BJ (cell line): ENCODE measurements at regions of chr3 and their contacts with region 1.

Region 1: DNA sequence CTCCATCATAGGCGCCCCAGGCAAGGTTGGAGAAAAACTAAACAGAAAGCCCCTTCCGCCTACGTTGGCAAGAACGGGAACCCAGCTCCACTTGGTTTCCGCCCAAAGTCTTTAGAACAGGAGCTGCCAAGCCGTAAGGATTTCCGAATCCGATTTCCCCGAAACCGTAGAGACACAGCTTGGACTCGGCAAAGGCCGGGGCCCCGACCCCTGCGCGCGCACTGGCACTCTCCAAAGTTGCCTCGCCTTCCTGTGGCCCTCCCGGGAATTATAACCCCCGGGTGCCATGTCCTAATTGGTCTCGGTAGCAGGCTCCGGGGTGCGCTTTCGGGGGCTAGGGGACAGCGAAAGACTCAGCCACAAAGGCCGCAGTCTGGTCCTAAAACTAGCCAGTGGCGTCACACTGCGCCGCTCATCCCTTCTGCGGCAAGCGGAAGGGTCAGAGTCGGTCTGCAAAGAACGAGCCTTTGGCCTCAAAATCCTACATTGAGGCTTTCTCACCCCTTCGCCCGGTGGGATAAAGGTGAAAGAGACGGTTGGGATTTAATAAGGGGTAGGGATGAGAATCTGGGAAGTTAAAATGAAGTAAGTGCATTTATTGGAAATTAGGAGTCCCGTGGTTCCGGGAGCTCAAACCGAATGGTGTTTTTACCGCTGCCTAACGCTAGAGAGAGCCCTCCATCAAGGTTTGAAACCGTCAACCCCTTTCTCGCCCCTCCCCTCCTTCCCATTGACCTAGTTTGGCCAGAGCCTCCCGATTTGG is 6.8 kb downstream of the BCL6 start:
- DNase-seq: no peak
- H3K4me3 ChIP-seq: peak overlapping the region; percentile 45
- H3K27me3 ChIP-seq: no peaks in the 10 kb centered on the region
- CTCF ChIP-seq: peak; percentile 77

Region 2: GRCh38 chr3:187533797-187534196 is 204.7 kb before region 1 on chr3:
- CTCF ChIA-PET with region 1: no interaction called
- POLR2A ChIA-PET with region 1: no interaction called
- DNase-seq: no peak
- H3K4me3 ChIP-seq: no peak overlapping the region
- H3K27me3 ChIP-seq: no peaks in the 10 kb centered on the region
- CTCF ChIP-seq: no peak

Region 3: DNA sequence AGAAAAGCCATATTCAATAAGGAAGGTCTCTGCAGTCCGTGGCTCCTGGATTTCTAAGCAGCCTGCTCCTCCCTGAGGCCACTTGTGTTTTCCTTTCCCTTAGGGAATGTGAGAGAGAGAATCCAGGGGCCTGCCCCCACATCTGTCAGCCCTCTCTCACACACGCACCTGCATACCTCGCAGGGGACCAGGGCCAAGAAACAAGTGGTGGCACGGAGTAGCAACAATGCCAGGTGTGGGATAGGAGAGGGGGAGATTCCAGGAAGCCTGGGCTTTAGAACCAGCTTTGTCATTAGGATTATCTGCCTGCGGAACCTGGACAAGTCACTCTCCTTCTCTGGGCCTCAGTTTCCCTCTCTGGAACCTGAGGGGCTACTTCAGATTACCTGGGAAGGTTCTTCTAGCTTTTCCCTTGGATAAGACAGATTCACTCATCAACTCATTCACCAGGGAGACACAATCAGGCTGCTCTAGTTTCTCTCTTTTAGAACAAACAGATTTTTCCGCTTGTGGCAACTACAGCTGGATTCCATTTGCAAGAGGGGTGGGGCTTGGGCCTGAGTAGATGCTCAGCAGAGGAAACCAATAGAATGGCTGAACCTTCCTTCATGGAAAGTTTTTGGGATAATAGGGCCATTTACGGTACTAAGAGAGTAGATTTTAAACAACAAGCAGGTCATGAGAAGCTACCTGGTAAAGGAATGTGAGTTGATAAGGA is 12.7 kb before region 1 on chr3:
- CTCF ChIA-PET with region 1: interaction called, 21 read pairs
- POLR2A ChIA-PET with region 1: no interaction called
- DNase-seq: no peak
- H3K4me3 ChIP-seq: no peak overlapping the region
- H3K27me3 ChIP-seq: no peaks in the 10 kb centered on the region
- CTCF ChIP-seq: no peak

Region 4: DNA sequence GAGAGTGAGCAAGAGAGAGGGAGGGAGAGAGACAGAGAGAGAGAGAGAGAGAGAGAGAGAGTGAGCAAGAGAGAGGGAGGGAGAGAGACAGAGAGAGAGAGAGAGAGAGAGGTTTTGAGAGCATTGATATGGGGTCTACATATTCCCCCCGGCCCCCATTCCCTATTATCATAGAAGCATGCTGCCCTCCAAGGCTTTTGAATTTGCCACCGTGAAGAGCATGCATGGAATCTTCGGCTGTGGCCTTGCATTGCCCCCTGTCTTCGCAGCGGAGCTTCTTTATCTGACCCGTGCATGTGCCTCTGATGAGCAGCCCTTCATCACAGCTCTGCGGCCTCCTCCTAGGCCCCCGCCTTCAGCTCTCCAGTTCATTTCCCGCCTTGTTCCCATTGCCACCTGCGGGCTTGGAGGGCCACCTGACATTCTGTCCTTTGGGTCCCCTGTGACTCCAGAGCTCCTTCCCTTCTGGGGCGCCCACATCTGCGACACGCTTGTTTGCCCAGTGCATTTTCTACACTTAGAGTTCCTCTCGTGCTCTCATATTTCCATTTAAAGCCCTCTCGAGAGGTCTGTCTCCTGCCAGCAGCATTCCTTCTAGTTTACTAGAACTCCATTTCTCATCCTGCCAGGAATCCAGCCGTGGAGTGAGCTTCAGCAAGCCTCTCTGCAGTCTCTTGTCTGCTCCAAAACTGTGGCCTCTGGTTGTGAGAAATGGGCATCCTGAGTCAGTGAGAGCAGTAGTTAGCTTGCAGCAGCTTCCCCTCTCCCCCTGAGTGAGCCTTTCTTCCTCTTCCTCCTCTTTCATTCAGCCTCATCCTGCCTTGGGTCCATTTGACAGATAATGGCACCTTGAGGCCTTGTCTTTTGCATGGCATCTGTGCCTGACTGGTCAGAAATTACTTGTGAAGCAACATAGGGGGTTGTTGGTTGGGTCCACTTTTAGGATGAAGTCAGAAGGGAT is 440.8 kb after region 1 on chr3:
- CTCF ChIA-PET with region 1: interaction called, 3 read pairs
- POLR2A ChIA-PET with region 1: interaction called, 12 read pairs
- DNase-seq: no peak
- H3K4me3 ChIP-seq: no peak overlapping the region
- H3K27me3 ChIP-seq: no peaks in the 10 kb centered on the region
- CTCF ChIP-seq: 0 out of 2 replicates have a peak, but pooled peaks have one; percentile 13

Region 5: GRCh38 chr3:188421836-188422540 is 683.5 kb after region 1 on chr3:
- CTCF ChIA-PET with region 1: interaction called, 10 read pairs
- POLR2A ChIA-PET with region 1: no interaction called
- DNase-seq: no peak
- H3K4me3 ChIP-seq: no peak overlapping the region
- H3K27me3 ChIP-seq: no peaks in the 10 kb centered on the region
- CTCF ChIP-seq: no peak

Region 6: GRCh38 chr3:188881954-188882641 is 1143.6 kb after region 1 on chr3:
- CTCF ChIA-PET with region 1: interaction called, 10 read pairs
- POLR2A ChIA-PET with region 1: no interaction called
- DNase-seq: peak; percentile 87
- H3K4me3 ChIP-seq: no peak overlapping the region
- H3K27me3 ChIP-seq: no peaks in the 10 kb centered on the region
- CTCF ChIP-seq: no peak

Region 7: GRCh38 chr3:189041482-189042090 is 1303.1 kb after region 1 on chr3:
- CTCF ChIA-PET with region 1: interaction called, 25 read pairs
- POLR2A ChIA-PET with region 1: no interaction called
- DNase-seq: no peak
- H3K4me3 ChIP-seq: no peak overlapping the region
- H3K27me3 ChIP-seq: peaks cover 3% of the 10 kb centered on the region
- CTCF ChIP-seq: peak; percentile 52